Right ventricle myocardium inferior (tissue), 1 donor: ENCODE measurements at regions of chr16 and their contacts with region 1.

Region 1: DNA sequence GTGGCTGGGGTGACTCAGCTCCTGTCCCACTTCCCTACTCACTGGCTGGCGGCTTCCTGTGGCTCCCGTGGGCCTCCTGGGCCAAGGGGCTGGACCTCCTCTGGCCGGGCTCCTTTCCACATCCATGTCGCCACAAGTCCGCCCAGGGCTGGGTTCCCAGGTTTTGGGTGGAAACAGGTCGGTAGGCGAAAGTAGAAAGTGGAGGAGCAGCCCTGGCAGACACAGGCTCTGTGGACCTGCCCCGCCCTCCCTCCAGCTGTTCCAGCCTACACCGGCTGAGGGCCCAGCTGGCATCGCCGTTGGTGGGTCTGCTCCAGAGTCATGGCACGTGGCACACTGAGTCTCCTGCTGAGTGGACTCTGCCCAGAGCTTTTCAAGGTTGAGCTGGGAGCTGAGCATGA is 28.7 kb downstream of the GSE1 start:
- DNase-seq: no peak
- ATAC-seq: peak; percentile 70

Region 2: GRCh38 chr16:85615852-85616606 is 25.7 kb before region 1 on chr16:
- intact Hi-C with region 1: loop called (anchors 1 kb)
- DNase-seq: peak; percentile 91
- ATAC-seq: peak; percentile 5